Mucosa of descending colon (tissue), 3 donors: ENCODE measurements at regions of chr14 and their contacts with region 1.

Region 1: GRCh38 chr14:61894452-61895077 is 132.3 kb downstream of the SNAPC1 start:
- DNase-seq: peak in 2 of 3 donors; percentile 40 to 85
- ATAC-seq: peak; percentile 55
- H3K4me3 ChIP-seq: no peak overlapping the region
- H3K4me1 ChIP-seq: no peaks in the 10 kb centered on the region
- CTCF ChIP-seq: peak; percentile 29

Region 2: GRCh38 chr14:62126879-62127478 is 232.4 kb after region 1 on chr14:
- intact Hi-C with region 1: loop called in 1 of 2 experiments (anchors 2 kb)
- DNase-seq: peak in 1 of 3 donors; percentile 34
- ATAC-seq: peak; percentile 50
- H3K4me3 ChIP-seq: no peak overlapping the region
- H3K4me1 ChIP-seq: no peaks in the 10 kb centered on the region
- CTCF ChIP-seq: peak; percentile 31